K562 (cell line): ENCODE measurements at regions of chr5 and their contacts with region 1.

Region 1: DNA sequence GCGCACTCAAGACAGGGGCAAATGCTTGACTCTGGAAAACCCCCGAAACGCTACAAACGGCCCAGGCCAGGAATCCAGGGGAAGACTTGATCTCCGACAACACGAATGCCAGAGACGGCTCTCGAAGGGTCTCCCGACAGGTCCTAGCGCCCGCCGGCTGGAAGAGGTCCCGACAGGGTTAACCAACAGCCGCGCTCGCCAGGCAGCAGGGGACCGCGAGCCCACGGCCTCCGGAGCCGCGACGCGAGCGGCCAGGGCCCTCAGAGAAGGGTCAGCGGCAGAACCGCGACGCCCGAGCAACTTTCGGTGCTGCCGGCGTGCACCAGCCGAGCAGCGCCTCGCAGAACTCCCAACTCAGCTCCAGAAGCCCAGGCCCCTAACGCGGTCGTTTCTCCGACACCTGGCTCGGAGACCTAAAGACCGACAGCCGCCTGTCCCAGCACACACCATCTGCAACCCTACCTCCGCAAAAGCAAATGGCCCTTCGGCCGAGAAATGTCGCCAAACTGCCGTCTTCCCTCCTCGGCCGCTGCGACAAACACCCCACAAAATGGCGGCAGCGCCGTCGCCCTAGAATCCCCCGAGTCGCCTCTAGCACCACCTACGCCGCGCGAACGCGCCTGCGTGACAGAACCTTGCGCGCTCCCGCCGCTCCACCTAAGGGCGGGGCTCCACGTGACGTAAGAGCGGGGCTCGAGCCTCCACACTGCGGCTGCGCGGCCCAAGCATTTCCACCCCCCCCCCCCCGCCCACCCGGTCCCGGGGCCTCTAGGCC is at the start of gene CLK4:
- DNase-seq: peak; percentile 96 to 98 (median 97)
- ATAC-seq: peak; percentile 90
- H3K4me3 ChIP-seq: peak within 1 kb of the TSS; percentile 96
- H3K27ac ChIP-seq: peak within 1 kb of the TSS; percentile 84
- H3K4me1 ChIP-seq: peaks cover 4 to 5% of the 10 kb centered on the region in 2 experiments; a peak in 3 of 5 replicates
- H3K27me3 ChIP-seq: peaks cover 0 to 4% of the 10 kb centered on the region in 2 experiments; a peak in 1 of 5 replicates
- CTCF ChIP-seq: no peak; a peak in 1 of 6 replicates
- EP300 ChIP-seq: no peak
- POLR2A ChIP-seq: peak; percentile 95
- RAD21 ChIP-seq: no peak
- polyA plus RNA-seq, gene CLK4: 12.9 to 13.9 TPM

Region 2: DNA sequence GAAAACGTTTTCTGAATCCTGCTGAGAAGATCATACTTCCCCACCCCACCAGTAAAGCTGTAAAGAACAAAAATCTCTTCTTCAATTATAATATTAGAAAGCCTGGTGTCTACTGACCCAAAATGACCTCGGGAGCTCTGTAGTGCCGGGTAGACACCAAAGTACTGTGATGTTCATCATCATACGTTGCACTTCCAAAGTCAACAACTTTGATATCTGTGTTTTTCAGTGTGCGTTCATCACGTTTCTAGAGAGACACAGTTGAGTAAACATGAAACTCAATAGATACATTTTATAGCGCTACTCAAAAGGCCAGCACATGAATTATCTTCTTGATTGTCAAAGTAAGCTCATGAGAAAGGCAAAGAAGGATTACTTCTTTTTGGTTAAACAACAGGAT is 14.4 kb before region 1 on chr5:
- CTCF ChIA-PET with region 1: no interaction called
- POLR2A ChIA-PET with region 1: interaction called, 14 read pairs
- in situ Hi-C with region 1: no loop called
- intact Hi-C with region 1: no loop called
- DNase-seq: no peak
- ATAC-seq: no peak
- H3K4me3 ChIP-seq: no peak overlapping the region
- H3K27ac ChIP-seq: no peak overlapping the region
- H3K4me1 ChIP-seq: no peaks in the 10 kb centered on the region
- H3K27me3 ChIP-seq: no peaks in the 10 kb centered on the region
- CTCF ChIP-seq: no peak
- EP300 ChIP-seq: no peak
- POLR2A ChIP-seq: no peak
- RAD21 ChIP-seq: no peak

Region 3: GRCh38 chr5:178637356-178638074 is 10.8 kb after region 1 on chr5:
- CTCF ChIA-PET with region 1: no interaction called
- POLR2A ChIA-PET with region 1: interaction called, 12 read pairs
- in situ Hi-C with region 1: no loop called
- intact Hi-C with region 1: no loop called
- DNase-seq: no peak
- ATAC-seq: no peak
- H3K4me3 ChIP-seq: no peak overlapping the region
- H3K27ac ChIP-seq: no peak overlapping the region
- H3K4me1 ChIP-seq: no peaks in the 10 kb centered on the region
- H3K27me3 ChIP-seq: peaks cover 16 to 43% of the 10 kb centered on the region in 2 experiments
- CTCF ChIP-seq: no peak
- EP300 ChIP-seq: no peak
- POLR2A ChIP-seq: no peak
- RAD21 ChIP-seq: no peak